Activated T-helper 1 cell treated with anti-CD3 and anti-CD28 coated beads, Interleukin-12 subunit alpha, Interleukin-12 subunit beta, Interleukin-2, Interleukin-4 antibody, amounts not matched to agents 30 ng/mL and 10 ng/mL and 1 ng/mL, durations not matched to agents 14 hours and 24 hours and 36 hours (primary cell): ENCODE measurements at regions of chr3 and their contacts with region 1.

Region 1: DNA sequence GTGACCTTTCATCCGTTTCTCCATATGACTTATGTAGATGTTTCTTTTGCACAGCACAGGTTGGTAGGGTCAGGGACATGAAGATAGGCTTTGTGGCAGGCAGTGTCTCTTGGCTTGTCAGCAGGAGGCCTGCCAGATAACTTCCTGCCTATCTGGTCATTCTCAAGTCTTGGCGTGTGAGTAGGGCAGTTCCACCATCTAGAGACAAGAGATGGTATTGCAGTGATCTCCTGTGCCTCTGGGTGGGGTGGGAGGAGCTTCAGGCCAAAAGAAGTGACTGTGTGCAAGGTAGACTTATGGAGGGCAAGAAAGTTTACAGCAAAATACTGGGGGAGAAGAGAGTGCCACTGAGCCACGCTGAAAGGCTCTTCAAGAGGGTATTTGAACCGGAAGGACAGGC is 11.0 kb downstream of the TEX264 start:
- DNase-seq: peak; percentile 77
- H3K4me3 Mint-ChIP-seq: peak overlapping the region; percentile 71
- H3K27ac Mint-ChIP-seq: peak overlapping the region; percentile 86
- H3K4me1 Mint-ChIP-seq: peaks cover 94% of the 10 kb centered on the region
- H3K27me3 Mint-ChIP-seq: no peaks in the 10 kb centered on the region

Region 2: GRCh38 chr3:50358911-50359759 is 1322.9 kb before region 1 on chr3 and contains the start of gene TMEM115:
- intact Hi-C with region 1: loop called (anchors 10 kb)
- DNase-seq: peak; percentile 95
- H3K4me3 Mint-ChIP-seq: peak within 1 kb of the TSS; percentile 99
- H3K27ac Mint-ChIP-seq: peak within 1 kb of the TSS; percentile 96
- H3K4me1 Mint-ChIP-seq: peaks cover 43% of the 10 kb centered on the region
- H3K27me3 Mint-ChIP-seq: peaks cover 4% of the 10 kb centered on the region
- total RNA-seq, gene TMEM115: 23.6 and 25.4 TPM in 2 replicates

Region 3: GRCh38 chr3:51538459-51539290 is 143.4 kb before region 1 on chr3 and contains the start of gene RAD54L2:
- intact Hi-C with region 1: loop called (anchors 1 kb)
- DNase-seq: peak; percentile 71
- H3K4me3 Mint-ChIP-seq: peak within 1 kb of the TSS; percentile 93
- H3K27ac Mint-ChIP-seq: peak within 1 kb of the TSS; percentile 90
- H3K4me1 Mint-ChIP-seq: peaks cover 32% of the 10 kb centered on the region
- H3K27me3 Mint-ChIP-seq: no peaks in the 10 kb centered on the region
- total RNA-seq, gene RAD54L2: 43.2 and 46.5 TPM in 2 replicates

Region 4: DNA sequence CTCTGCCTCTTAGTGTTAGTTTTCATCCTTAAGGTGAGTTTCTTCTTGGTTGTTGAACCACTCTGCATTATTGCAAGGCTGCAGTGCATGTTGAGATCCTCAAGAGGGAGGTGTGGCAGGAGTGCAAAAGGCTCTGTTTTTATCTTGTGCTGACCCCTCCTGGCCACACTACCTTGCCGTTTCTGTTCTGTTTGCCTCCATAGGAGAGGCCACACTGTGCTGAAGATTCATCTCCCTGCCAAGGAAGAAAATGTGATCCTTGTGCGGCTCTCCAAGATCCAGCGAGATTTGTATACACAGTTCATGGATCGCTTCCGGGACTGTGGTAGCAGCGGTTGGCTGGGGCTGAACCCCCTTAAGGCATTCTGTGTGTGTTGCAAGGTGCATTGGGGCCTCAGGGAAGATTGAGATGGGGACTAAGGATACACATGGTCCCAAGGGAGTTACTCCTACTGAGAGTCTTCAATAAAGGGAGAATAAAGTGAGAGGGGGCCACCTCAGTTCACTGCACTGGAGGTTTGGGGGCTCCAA is 44.1 kb before region 1 on chr3:
- intact Hi-C with region 1: loop called (anchors 1 kb)
- DNase-seq: peak; percentile 11
- H3K4me3 Mint-ChIP-seq: no peak overlapping the region
- H3K27ac Mint-ChIP-seq: no peak overlapping the region
- H3K4me1 Mint-ChIP-seq: no peaks in the 10 kb centered on the region
- H3K27me3 Mint-ChIP-seq: no peaks in the 10 kb centered on the region

Region 5: DNA sequence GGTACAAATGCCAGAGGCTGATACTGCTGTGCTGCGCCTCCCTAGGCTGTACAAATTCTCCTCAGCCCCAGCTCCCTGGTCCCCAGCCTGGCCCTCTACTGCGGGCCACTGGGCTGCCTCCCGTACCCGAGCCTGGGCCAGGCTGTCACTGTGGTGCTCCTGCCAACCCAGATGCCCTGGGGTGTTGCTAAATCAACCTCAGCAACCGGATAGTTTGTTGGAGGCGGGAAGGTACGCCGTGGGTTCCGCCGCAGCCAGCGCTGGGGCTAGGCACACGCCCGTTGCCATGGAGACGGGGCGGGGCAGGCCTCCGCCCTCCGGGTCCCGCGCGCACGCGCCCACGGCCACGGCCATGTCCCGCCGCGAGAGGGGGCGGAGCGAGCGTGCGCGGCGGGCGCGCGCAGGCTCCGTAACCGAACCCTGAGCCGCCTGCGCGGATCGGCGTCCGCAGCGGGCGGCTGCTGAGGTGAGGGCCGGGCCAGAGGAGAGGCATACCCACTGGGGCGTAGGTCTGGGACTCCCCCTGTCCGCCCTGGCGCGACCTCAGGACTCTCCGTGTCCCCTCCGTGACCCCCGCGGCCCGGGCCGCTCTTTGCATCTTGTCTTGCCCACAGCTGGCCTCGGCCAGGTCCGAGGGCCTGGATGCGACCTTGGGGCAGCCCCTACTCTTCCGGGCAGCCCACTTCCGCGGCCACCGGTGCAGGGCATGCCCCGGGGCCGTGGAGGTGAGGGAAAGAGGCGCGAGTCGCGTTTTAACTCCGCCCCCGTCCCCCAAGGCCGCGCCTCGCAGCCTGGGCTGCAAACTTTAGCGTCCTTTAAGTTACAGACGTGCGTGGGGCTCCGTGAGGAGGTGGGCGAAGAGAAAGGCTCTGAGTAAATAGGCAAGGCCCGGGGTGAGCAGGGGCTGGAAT is 11.0 kb before region 1 on chr3 and contains the start of gene TEX264:
- intact Hi-C with region 1: loop called (anchors 1 kb)
- DNase-seq: peak; percentile 95
- H3K4me3 Mint-ChIP-seq: peak within 1 kb of the TSS; percentile 86
- H3K27ac Mint-ChIP-seq: peak within 1 kb of the TSS; percentile 87
- H3K4me1 Mint-ChIP-seq: peaks cover 65% of the 10 kb centered on the region
- H3K27me3 Mint-ChIP-seq: no peaks in the 10 kb centered on the region
- total RNA-seq, gene TEX264: 50.3 and 52.0 TPM in 2 replicates

Region 6: DNA sequence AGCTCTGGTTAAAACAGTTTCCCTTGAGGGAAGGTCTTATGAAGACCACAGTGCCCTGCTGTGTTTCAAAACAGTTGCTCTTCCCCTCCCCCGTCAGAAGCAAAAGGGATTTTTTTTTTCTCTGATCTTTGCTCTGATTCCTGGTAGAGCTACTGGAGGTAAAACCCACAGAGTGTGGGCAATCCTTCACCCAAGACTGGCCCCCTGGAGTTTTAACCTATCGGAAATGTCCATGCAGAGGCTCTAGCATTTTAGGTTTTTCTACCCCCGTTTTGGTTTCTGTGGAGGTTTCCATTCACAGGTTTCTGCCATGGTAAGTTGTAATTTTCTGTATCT is 52.5 kb after region 1 on chr3:
- intact Hi-C with region 1: loop called (anchors 5 kb)
- DNase-seq: peak; percentile 39
- H3K4me3 Mint-ChIP-seq: peak overlapping the region; percentile 29
- H3K27ac Mint-ChIP-seq: peak overlapping the region; percentile 87
- H3K4me1 Mint-ChIP-seq: peaks cover 32% of the 10 kb centered on the region
- H3K27me3 Mint-ChIP-seq: peaks cover 6% of the 10 kb centered on the region

Region 7: GRCh38 chr3:51751287-51751686 is 69.2 kb after region 1 on chr3:
- intact Hi-C with region 1: no loop called
- DNase-seq: no peak
- H3K4me3 Mint-ChIP-seq: no peak overlapping the region
- H3K27ac Mint-ChIP-seq: no peak overlapping the region
- H3K4me1 Mint-ChIP-seq: peaks cover 26% of the 10 kb centered on the region
- H3K27me3 Mint-ChIP-seq: peaks cover 12% of the 10 kb centered on the region